Activated CD4-positive, alpha-beta memory T cell treated with anti-CD3 and anti-CD28 coated beads, Interleukin-2, amount 10 ng/mL, durations not matched to agents 7 days and 5 days (primary cell): ENCODE measurements at regions of chr9 and their contacts with region 1.

Region 1: DNA sequence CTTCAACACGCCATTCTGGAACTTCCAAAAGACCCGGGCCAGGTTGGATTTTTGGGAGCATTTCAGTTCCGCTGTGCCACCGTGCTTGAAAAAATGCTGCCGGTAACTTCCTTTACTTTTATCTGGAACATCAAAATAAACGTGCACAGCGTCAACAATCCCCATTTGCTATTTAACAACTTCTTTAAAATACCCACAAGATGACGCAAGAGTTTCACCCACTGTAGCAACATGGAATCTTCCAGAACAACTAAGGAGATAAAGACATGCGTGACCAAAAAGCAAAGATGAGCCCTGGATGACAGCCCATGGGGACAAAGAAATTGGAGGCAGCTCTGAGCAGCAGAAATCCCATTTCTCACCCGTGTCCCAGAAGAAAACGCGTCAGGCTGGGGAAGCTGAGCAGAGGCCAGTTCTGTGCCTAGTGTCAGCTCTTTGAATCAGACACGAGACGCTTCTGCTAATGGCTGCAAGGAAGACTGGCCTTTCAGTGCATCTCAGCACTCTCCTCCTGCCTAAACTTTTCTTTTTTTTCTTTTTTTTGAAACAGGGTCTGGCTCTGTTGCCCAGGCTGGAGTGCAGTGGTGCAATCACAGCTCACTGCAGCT is 61.3 kb downstream of the SECISBP2 start:
- DNase-seq: no peak
- H3K4me3 Mint-ChIP-seq: no peak overlapping the region
- H3K27ac Mint-ChIP-seq: peak overlapping the region; percentile 29
- H3K4me1 Mint-ChIP-seq: peaks cover 68% of the 10 kb centered on the region
- H3K27me3 Mint-ChIP-seq: no peaks in the 10 kb centered on the region

Region 2: DNA sequence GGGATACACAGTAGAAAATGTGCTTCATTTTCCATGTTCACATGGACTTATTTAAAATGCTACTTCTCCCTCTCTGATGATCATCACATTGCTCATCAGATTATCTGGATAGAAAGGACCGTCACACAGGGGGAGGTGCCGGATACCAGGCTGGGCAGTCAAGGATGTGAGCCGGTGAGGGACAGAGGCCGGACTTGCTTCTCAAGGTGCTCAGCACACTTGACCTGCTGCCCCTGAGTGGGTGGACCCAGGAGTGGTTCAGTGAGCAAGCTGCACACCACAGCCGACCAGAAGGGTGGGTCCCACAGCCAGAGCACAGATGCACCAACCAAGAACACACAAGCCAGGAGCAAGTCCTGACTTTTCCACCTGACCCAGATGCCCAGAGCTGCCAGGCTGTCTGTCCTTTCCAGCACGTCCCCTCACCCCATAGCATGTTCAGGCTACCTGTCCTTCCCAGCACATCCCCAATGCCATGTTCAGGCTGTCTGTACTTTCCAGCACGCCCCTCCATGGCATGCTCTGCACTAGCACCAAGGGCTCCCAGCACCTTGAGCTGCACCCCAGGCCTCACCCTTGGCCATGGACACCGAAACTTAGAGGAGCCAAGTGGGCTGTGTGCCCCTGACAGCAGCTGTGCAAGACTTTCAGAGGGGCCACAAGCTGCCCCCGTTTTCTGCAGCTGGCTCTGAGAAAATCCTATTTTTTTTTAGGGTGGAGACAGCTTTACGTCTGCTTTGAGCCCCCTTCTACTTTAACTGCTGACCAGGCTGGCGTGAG is 16.5 kb after region 1 on chr9:
- CTCF ChIA-PET with region 1: interaction called, 3 read pairs
- POLR2A ChIA-PET with region 1: interaction called, 11 read pairs
- DNase-seq: no peak
- H3K4me3 Mint-ChIP-seq: no peak overlapping the region
- H3K27ac Mint-ChIP-seq: no peak overlapping the region
- H3K4me1 Mint-ChIP-seq: peaks cover 7% of the 10 kb centered on the region
- H3K27me3 Mint-ChIP-seq: no peaks in the 10 kb centered on the region